Transverse colon (tissue), 4 donors: ENCODE measurements at regions of chr10 and their contacts with region 1.

Region 1: DNA sequence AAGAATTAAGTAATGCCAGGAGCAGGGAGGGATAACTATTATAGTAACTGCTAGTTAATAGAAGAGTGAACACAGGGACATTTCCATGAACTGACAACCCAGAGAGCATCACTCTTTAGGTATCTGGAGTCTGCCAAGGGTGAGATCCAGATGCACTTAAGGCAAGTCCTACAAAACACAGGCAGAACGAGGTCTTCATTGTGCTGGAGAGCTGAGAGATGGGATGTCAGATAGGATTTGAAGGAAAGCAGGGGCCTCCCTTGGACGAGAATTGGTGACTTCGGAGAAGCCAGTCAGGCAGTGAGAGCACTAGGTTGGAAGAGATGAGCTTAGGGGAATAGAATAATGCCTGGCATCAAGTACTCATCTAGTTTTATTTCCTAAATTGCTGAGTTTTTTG is 684.5 kb downstream of the GATA3 start:
- DNase-seq: no peak
- H3K4me3 ChIP-seq: no peak overlapping the region
- H3K27ac ChIP-seq: no peak overlapping the region
- H3K4me1 ChIP-seq: no peaks in the 10 kb centered on the region
- H3K27me3 ChIP-seq: no peaks in the 10 kb centered on the region
- CTCF ChIP-seq: no peak
- EP300 ChIP-seq: no peak
- POLR2A ChIP-seq: no peak

Region 2: GRCh38 chr10:8776926-8777622 is 38.1 kb after region 1 on chr10:
- in situ Hi-C with region 1: no loop called
- intact Hi-C with region 1: loop called (anchors 1 kb)
- DNase-seq: no peak
- H3K4me3 ChIP-seq: no peak overlapping the region
- H3K27ac ChIP-seq: no peak overlapping the region
- H3K4me1 ChIP-seq: no peaks in the 10 kb centered on the region
- H3K27me3 ChIP-seq: no peaks in the 10 kb centered on the region
- CTCF ChIP-seq: no peak
- EP300 ChIP-seq: no peak
- POLR2A ChIP-seq: no peak

Region 3: GRCh38 chr10:9209105-9209798 is 470.3 kb after region 1 on chr10:
- in situ Hi-C with region 1: no loop called
- intact Hi-C with region 1: no loop called
- DNase-seq: peak; percentile 53
- H3K4me3 ChIP-seq: no peak overlapping the region
- H3K27ac ChIP-seq: no peak overlapping the region
- H3K4me1 ChIP-seq: no peaks in the 10 kb centered on the region
- H3K27me3 ChIP-seq: peaks cover 5% of the 10 kb centered on the region
- CTCF ChIP-seq: peak; percentile 80 to 92 (median 88)
- EP300 ChIP-seq: no peak
- POLR2A ChIP-seq: no peak